WTC11 (cell line): ENCODE measurements at regions of chr3 and their contacts with region 1.

Region 1: GRCh38 chr3:8441969-8442559 is 59.6 kb upstream of the LMCD1 start:
- DNase-seq: peak; percentile 39
- ATAC-seq: peak; percentile 78
- H3K4me3 Mint-ChIP-seq: no peak overlapping the region
- H3K27ac Mint-ChIP-seq: no peak overlapping the region
- H3K4me1 Mint-ChIP-seq: no peaks in the 10 kb centered on the region
- H3K27me3 Mint-ChIP-seq: peaks cover 5% of the 10 kb centered on the region; the same call in 1 of the 2 replicates
- CTCF ChIP-seq: peak; percentile 23; the same call in 1 of the 2 replicates

Region 2: GRCh38 chr3:8501371-8502131 is 59.5 kb after region 1 on chr3 and contains the start of gene LMCD1:
- CTCF ChIA-PET with region 1: interaction called, 11 read pairs
- POLR2A ChIA-PET with region 1: interaction called, 4 read pairs
- DNase-seq: peak; percentile 96
- ATAC-seq: peak; percentile 92
- H3K4me3 Mint-ChIP-seq: peak within 1 kb of the TSS; percentile 72
- H3K27ac Mint-ChIP-seq: peak within 1 kb of the TSS; percentile 95
- H3K4me1 Mint-ChIP-seq: peaks cover 74% of the 10 kb centered on the region
- H3K27me3 Mint-ChIP-seq: no peaks in the 10 kb centered on the region; the same call in 1 of the 2 replicates
- CTCF ChIP-seq: no peak
- total RNA-seq, gene LMCD1: 10.6 to 12.5 TPM (median 10.9 TPM) in 3 replicates

Region 3: GRCh38 chr3:8622873-8623691 is 181.0 kb after region 1 on chr3:
- CTCF ChIA-PET with region 1: interaction called, 11 read pairs
- POLR2A ChIA-PET with region 1: no interaction called
- DNase-seq: peak; percentile 87
- ATAC-seq: peak; percentile 96
- H3K4me3 Mint-ChIP-seq: peak overlapping the region; percentile 2; the same call in 1 of the 2 replicates
- H3K27ac Mint-ChIP-seq: peak overlapping the region; percentile 39; the same call in 1 of the 2 replicates
- H3K4me1 Mint-ChIP-seq: peaks cover 11% of the 10 kb centered on the region
- H3K27me3 Mint-ChIP-seq: peaks cover 4% of the 10 kb centered on the region; the same call in 1 of the 2 replicates
- CTCF ChIP-seq: peak; percentile 82